Activated CD4-positive, alpha-beta T cell treated with anti-CD3 and anti-CD28 coated beads for 36 hours (primary cell): ENCODE measurements at regions of chr3 and their contacts with region 1.

Region 1: DNA sequence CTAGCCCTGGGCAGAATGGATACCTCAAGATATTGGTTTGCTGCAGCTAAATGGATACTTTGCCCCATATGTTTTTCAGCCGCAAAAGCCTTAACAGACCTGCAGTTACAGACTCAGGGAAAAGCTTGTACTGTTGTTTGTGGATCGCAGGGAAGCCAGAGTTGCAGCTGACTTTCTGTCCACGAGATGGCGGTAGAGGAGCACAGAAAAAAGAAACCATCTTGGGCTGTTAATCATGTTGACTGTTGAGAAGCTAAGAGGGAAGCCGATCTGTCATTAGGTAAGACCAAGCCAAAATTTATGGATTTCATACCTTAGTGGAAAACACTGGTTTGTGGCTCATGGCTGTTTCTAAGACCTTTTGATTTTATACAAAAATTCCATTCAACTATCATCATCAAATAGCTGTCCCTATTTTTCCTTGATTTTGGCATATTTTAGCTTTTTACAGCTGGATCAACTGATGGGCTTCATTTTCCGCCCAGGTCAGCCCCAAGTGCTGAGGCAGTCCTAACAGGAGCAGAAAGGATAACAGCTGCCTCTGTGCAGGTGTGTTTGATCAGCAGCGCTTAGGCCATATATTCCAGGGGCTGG is 205.7 kb upstream of the ZPLD1 start:
- DNase-seq: peak; percentile 82
- ATAC-seq: peak; percentile 71
- H3K4me3 Mint-ChIP-seq: no peak overlapping the region
- H3K27ac Mint-ChIP-seq: no peak overlapping the region
- H3K4me1 Mint-ChIP-seq: peaks cover 14% of the 10 kb centered on the region
- H3K27me3 Mint-ChIP-seq: peaks cover 1% of the 10 kb centered on the region

Region 2: DNA sequence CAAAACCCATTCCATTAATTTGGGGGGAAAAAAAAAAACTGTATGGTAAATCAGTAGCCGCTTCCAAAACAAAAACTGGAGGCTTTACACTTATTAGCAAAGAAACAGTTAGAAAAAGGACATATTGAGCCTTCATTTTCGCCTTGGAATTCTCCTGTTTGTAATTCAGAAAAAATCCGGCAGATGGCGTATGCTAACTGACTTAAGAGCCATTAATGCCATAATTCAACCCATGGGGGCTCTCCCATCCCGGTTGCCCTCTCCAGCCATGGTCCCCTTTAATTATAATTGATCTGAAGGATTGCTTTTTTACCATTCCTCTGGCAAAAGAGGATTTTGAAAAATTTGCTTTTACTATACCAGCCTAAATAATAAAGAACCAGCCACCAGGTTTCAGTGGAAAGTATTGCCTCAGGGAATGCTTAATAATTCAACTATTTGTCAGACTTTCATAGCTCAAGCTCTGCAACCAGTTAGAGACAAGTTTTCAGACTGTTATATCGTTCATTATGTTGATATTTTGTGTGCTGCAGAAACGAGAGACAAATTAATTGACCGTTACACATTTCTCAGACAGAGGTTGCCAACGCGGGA is 533.3 kb before region 1 on chr3:
- CTCF ChIA-PET with region 1: interaction called, 4 read pairs
- POLR2A ChIA-PET with region 1: no interaction called
- intact Hi-C with region 1: loop called (anchors 2 to 5 kb)
- DNase-seq: peak; percentile 48
- ATAC-seq: no peak
- H3K4me3 Mint-ChIP-seq: no peak overlapping the region
- H3K27ac Mint-ChIP-seq: no peak overlapping the region
- H3K4me1 Mint-ChIP-seq: peaks cover 7% of the 10 kb centered on the region
- H3K27me3 Mint-ChIP-seq: no peaks in the 10 kb centered on the region

Region 3: GRCh38 chr3:101809178-101810021 is 419.8 kb before region 1 on chr3:
- CTCF ChIA-PET with region 1: interaction called, 115 read pairs
- POLR2A ChIA-PET with region 1: no interaction called
- intact Hi-C with region 1: loop called (anchors 1 kb)
- DNase-seq: peak; percentile 45
- ATAC-seq: peak; percentile 53
- H3K4me3 Mint-ChIP-seq: no peak overlapping the region
- H3K27ac Mint-ChIP-seq: peak overlapping the region; percentile 53
- H3K4me1 Mint-ChIP-seq: peaks cover 48% of the 10 kb centered on the region
- H3K27me3 Mint-ChIP-seq: no peaks in the 10 kb centered on the region

Region 4: DNA sequence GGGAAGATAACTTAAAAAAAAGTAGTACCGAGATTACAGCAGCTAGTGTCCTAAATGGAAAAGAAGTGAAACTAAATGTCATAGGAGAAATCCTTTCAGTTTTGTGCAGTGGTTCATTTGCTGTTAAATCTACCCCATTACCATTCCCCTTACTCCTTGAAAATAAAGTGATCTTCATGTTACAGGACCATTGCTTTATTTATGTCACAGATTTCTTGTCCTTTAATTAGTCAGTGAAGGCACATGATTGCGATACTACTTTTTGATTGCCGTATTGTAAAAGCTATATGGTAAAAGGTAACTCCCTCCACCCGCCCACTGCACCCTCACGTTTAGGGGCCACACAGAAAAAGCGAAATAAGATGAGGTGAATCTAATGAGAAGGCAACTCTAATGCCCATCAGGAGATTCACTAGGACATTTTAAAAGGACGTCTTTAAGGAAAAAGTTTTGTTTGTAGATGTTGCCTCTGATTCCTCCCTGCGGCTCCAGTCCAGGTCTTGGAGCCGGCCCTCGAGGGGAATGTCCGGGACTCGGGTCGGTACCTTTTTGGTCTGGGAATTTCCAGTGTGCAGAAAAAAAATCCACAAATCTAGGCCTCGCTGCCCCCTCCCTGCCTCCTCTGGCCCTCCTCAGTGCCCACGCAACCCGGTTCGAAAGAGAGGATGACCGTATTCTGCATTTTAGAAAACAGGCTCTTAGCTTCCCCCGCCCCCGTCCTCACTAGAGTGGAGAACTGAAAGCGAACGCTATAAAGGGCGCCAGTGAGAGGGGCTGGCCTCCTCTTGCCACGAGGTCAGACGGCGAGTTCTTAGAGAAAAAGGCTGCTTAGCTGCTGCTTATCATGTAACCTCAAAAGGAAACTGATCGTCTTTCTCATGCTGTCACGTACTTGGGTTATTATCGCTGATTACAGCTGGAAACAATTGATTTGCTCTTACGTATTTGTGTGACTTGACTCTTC is 401.7 kb before region 1 on chr3:
- CTCF ChIA-PET with region 1: interaction called, 19 read pairs
- POLR2A ChIA-PET with region 1: no interaction called
- intact Hi-C with region 1: loop called in 1 of 2 experiments (anchors 5 kb)
- DNase-seq: peak; percentile 94
- ATAC-seq: peak; percentile 86
- H3K4me3 Mint-ChIP-seq: peak overlapping the region; percentile 77
- H3K27ac Mint-ChIP-seq: peak overlapping the region; percentile 96
- H3K4me1 Mint-ChIP-seq: peaks cover 60% of the 10 kb centered on the region
- H3K27me3 Mint-ChIP-seq: no peaks in the 10 kb centered on the region

Region 5: DNA sequence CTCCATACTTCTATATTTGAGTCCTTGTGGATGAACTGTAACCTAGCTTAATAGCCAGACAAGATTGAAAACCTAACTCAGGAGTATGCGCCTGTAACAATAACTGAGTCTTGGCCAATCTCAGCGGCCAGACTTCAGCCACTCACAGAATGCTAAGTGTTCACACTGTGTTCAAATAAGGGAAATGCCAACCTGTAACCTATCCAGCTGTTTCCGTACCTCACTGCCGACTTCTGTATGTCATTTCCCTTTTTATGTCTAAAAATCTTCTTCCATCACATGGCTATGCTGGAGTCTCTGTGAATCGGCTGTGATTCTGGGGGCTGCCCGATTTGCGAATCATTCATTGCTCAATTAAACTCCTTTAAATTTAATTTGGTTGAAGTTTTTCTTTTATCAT is 210.6 kb before region 1 on chr3:
- CTCF ChIA-PET with region 1: interaction called, 12 read pairs
- POLR2A ChIA-PET with region 1: no interaction called
- intact Hi-C with region 1: no loop called
- DNase-seq: peak; percentile 5
- ATAC-seq: no peak
- H3K4me3 Mint-ChIP-seq: no peak overlapping the region
- H3K27ac Mint-ChIP-seq: no peak overlapping the region
- H3K4me1 Mint-ChIP-seq: peaks cover 18% of the 10 kb centered on the region
- H3K27me3 Mint-ChIP-seq: peaks cover 2% of the 10 kb centered on the region

Region 6: GRCh38 chr3:102163036-102163827 is 65.9 kb before region 1 on chr3:
- CTCF ChIA-PET with region 1: interaction called, 10 read pairs
- POLR2A ChIA-PET with region 1: no interaction called
- intact Hi-C with region 1: no loop called
- DNase-seq: no peak
- ATAC-seq: peak; percentile 22
- H3K4me3 Mint-ChIP-seq: no peak overlapping the region
- H3K27ac Mint-ChIP-seq: peak overlapping the region; percentile 15
- H3K4me1 Mint-ChIP-seq: peaks cover 23% of the 10 kb centered on the region
- H3K27me3 Mint-ChIP-seq: no peaks in the 10 kb centered on the region

Region 7: DNA sequence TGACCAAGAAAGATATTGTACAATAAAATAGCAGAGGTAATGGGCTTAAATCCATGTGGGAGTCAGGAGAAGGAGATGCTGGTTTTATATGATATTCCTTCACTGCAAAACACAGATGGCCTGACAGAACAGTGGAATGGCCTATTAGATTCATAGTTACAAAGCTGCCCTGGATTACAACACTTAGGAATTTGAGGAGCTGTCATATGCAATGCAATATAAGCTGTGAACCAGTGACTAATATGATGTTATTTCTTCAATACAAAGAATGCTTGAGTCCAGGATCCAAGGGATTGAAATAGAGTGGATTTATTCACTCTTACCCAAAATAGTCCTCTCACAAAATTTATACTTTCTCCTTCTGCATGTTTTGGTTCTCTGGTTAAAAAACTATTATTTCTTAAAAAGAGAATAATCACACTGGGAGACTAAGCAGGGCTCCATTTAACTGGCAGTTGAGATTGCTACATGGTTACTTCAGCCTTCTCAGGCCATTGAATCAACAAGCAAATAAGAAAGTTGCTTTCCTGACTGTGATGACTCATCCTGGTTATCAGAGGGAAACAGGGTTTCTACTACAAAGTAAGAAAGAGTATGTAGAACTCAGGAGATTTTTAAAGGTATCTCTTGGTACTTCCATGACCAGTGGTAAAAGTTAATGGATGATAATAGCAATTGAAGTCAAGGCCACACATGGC is 125.8 kb after region 1 on chr3:
- CTCF ChIA-PET with region 1: no interaction called
- POLR2A ChIA-PET with region 1: no interaction called
- intact Hi-C with region 1: no loop called
- DNase-seq: no peak
- ATAC-seq: no peak
- H3K4me3 Mint-ChIP-seq: no peak overlapping the region
- H3K27ac Mint-ChIP-seq: no peak overlapping the region
- H3K4me1 Mint-ChIP-seq: no peaks in the 10 kb centered on the region
- H3K27me3 Mint-ChIP-seq: no peaks in the 10 kb centered on the region

Region 8: DNA sequence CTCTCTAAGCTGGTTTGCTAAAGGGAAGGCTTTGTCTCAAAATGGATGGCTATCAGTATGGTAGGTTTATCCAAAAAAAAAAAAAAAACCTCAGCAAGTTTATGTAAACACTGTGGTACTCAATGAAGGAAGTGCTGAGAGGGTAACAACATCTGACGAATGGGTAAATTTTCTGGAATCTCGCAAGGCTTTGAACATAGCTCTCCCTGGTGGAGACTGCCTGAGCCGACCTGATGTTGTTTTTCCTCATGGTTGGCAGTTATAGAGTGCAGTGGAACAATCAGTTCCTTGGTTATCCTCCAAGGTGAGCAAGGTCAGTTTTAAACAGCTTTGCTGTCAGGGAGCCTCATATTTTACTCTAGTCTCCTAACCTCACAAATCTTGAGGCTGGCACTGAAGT is 300.3 kb after region 1 on chr3:
- CTCF ChIA-PET with region 1: interaction called, 12 read pairs
- POLR2A ChIA-PET with region 1: no interaction called
- intact Hi-C with region 1: no loop called
- DNase-seq: no peak
- ATAC-seq: no peak
- H3K4me3 Mint-ChIP-seq: no peak overlapping the region
- H3K27ac Mint-ChIP-seq: no peak overlapping the region
- H3K4me1 Mint-ChIP-seq: no peaks in the 10 kb centered on the region
- H3K27me3 Mint-ChIP-seq: peaks cover 3% of the 10 kb centered on the region